Dendritic cell treated with granulocyte-macrophage colony-stimulating factor and Interleukin-4, amounts not matched to agents 40 ng/mL and 50 ng/mL, for 4 days (primary cell): ENCODE measurements at regions of chr10 and their contacts with region 1.

Region 1: DNA sequence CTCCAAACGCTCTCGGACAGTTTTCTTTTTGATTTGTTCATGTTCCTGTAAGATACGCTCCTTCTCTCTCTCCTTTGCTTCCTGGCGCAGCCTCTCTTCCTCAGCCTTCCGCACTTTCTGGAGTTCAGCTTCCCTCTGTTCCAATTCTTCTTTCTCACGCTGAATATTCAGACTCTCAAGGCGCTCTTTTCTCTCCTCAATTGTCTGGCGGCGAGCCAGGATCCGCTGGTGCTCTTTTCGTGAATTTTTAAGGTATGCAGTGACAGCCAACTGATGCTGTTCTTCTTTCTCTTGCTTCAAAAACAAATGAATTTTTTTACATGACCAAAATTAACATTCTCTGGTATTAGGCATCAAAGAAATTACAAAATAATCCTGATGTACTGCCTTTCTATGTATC is 22.6 kb downstream of the EIF3A start:
- H3K4me3 Mint-ChIP-seq: no peak overlapping the region
- H3K27ac Mint-ChIP-seq: peak overlapping the region; percentile 18
- H3K4me1 Mint-ChIP-seq: peaks cover 17% of the 10 kb centered on the region
- H3K27me3 Mint-ChIP-seq: no peaks in the 10 kb centered on the region

Region 2: GRCh38 chr10:119189811-119190282 is 131.8 kb after region 1 on chr10:
- intact Hi-C with region 1: no loop called
- H3K4me3 Mint-ChIP-seq: no peak overlapping the region
- H3K27ac Mint-ChIP-seq: no peak overlapping the region
- H3K4me1 Mint-ChIP-seq: peaks cover 23% of the 10 kb centered on the region
- H3K27me3 Mint-ChIP-seq: no peaks in the 10 kb centered on the region

Region 3: DNA sequence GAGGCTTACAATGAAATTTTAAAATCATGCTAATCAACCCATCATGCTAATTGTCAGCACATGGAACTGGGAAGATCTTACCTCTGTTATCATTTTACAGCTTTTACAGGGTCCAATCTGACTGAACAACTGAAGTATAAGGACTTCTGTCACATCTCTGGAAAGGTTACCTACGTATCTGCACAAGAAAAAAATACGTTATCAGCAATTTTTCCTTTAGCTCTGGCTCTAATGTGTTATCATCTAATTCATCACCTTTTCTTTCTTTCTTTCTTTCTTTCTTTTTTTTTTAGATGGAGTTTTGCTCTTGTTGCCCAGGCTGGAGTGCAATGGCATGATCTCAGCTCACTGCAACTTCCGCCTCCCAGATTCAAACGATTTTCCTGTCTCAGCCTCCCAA is 530.1 kb after region 1 on chr10:
- intact Hi-C with region 1: loop called (anchors 10 kb)
- H3K4me3 Mint-ChIP-seq: no peak overlapping the region
- H3K27ac Mint-ChIP-seq: no peak overlapping the region
- H3K4me1 Mint-ChIP-seq: peaks cover 14% of the 10 kb centered on the region
- H3K27me3 Mint-ChIP-seq: no peaks in the 10 kb centered on the region